CD4-positive, alpha-beta memory T cell (primary cell): ENCODE measurements at regions of chr4 and their contacts with region 1.

Region 1: GRCh38 chr4:6640292-6641163 is at the start of gene MRFAP1:
- DNase-seq: peak; percentile 94 to 97 (median 95)
- H3K4me3 ChIP-seq: peak within 1 kb of the TSS; percentile 90 to 92
- H3K4me3 Mint-ChIP-seq: peak within 1 kb of the TSS; percentile 96 to 100 (median 98)
- H3K27ac ChIP-seq: peak within 1 kb of the TSS; percentile 98
- H3K27ac Mint-ChIP-seq: peak within 1 kb of the TSS; percentile 98 to 100 (median 99)
- H3K4me1 ChIP-seq: peaks cover 31% of the 10 kb centered on the region
- H3K4me1 Mint-ChIP-seq: peaks cover 29 to 40% (median 34%) of the 10 kb centered on the region in 4 donors
- H3K27me3 ChIP-seq: no peaks in the 10 kb centered on the region
- H3K27me3 Mint-ChIP-seq: no peaks in the 10 kb centered on the region
- total RNA-seq, gene MRFAP1: 149 to 157 TPM

Region 2: DNA sequence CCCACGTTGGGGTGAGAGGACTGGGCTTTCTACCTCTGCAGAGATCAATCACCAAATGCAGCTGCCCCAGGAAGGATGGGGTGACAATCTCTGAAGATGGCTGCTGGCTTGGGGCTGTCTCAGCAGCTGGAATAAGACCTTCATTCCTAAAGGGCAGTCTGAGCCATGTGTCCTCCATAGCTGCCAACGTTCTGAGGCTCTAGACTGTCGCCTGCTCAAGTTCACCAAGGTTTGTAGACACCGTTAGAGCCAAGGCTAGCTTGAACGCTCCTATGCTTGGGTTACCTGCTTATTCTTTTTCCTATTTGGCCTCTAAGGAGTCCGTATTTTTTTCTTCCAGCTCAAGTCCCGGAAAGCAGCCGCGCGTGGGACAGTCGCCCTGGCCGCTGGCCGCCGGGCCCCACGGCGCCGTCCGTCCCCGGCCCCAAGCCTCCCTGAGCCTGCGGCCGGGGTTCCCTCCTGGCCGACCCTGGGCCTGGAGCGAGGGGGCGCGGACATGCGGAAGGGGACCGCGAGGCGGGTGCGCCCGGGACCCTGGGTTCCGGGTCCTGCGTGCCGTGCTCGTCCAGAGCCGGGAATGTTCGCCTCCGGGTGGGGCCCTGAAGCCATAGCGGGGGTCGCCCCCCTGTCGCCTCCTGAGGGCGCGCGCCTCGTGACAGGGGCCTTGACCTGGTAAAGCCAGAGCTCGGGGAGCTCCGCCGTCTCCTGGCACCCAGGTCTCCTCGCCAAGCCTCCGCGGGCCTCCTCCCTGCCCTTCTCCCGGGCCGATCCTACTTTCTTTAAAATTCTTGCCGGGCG is 23.3 kb after region 1 on chr4:
- CTCF ChIA-PET with region 1: interaction called, 6 read pairs
- POLR2A ChIA-PET with region 1: interaction called, 59 read pairs
- intact Hi-C with region 1: loop called (anchors 1 kb)
- DNase-seq: no peak
- H3K4me3 ChIP-seq: peak overlapping the region in 1 of 2 donors; percentile 19
- H3K4me3 Mint-ChIP-seq: peak overlapping the region in 6 of 8 donors; percentile 6 to 72 (median 45)
- H3K27ac ChIP-seq: no peak overlapping the region
- H3K27ac Mint-ChIP-seq: no peak overlapping the region
- H3K4me1 ChIP-seq: peaks cover 19% of the 10 kb centered on the region
- H3K4me1 Mint-ChIP-seq: peaks cover 0 to 15% (median 7%) of the 10 kb centered on the region in 4 donors
- H3K27me3 ChIP-seq: no peaks in the 10 kb centered on the region
- H3K27me3 Mint-ChIP-seq: no peaks in the 10 kb centered on the region

Region 3: GRCh38 chr4:6695660-6696630 is 55.4 kb after region 1 on chr4:
- CTCF ChIA-PET with region 1: interaction called, 6 read pairs
- POLR2A ChIA-PET with region 1: interaction called, 113 read pairs
- intact Hi-C with region 1: loop called (anchors 1 kb)
- DNase-seq: peak; percentile 78 to 89 (median 81)
- H3K4me3 ChIP-seq: no peak overlapping the region
- H3K4me3 Mint-ChIP-seq: peak overlapping the region; percentile 33 to 85 (median 71)
- H3K27ac ChIP-seq: peak overlapping the region; percentile 81
- H3K27ac Mint-ChIP-seq: peak overlapping the region; percentile 89 to 96 (median 92)
- H3K4me1 ChIP-seq: peaks cover 98% of the 10 kb centered on the region
- H3K4me1 Mint-ChIP-seq: peaks cover 59 to 92% (median 78%) of the 10 kb centered on the region in 4 donors
- H3K27me3 ChIP-seq: no peaks in the 10 kb centered on the region
- H3K27me3 Mint-ChIP-seq: no peaks in the 10 kb centered on the region

Region 4: DNA sequence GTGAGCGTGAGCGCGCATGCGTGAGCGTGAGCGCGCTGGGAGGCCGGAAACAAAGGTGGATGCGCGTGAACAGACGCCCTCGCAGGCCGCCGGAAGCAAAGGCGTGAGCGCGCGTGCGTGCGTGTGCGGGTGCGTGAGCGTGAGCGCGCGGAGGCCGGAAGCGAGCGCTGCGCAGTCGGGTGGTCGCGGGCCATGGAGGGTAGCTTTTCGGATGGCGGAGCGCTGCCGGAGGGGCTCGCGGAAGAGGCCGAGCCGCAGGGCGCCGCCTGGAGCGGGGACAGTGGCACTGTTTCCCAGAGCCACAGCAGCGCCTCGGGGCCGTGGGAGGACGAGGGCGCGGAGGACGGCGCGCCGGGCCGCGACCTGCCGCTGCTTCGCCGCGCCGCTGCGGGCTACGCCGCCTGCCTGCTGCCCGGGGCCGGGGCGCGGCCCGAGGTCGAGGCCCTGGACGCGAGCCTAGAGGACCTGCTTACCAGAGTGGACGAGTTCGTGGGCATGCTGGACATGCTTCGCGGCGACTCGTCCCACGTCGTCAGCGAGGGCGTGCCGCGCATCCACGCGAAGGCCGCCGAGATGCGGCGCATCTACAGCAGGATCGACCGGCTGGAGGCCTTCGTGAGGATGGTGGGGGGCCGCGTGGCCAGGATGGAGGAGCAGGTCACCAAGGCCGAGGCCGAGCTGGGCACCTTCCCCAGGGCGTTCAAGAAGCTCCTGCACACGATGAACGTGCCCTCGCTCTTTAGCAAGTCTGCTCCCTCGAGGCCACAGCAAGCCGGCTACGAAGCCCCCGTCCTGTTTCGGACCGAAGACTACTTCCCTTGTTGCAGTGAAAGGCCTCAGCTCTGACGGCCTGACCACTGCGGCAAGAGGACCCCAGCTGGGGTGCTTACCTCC is 75.7 kb after region 1 on chr4 and contains the start of gene BLOC1S4:
- CTCF ChIA-PET with region 1: interaction called, 13 read pairs
- POLR2A ChIA-PET with region 1: interaction called, 65 read pairs
- intact Hi-C with region 1: loop called (anchors 1 kb)
- DNase-seq: peak; percentile 86 to 94 (median 93)
- H3K4me3 ChIP-seq: peak within 1 kb of the TSS; percentile 38 to 84
- H3K4me3 Mint-ChIP-seq: peak within 1 kb of the TSS; percentile 87 to 99 (median 93)
- H3K27ac ChIP-seq: peak within 1 kb of the TSS; percentile 92
- H3K27ac Mint-ChIP-seq: peak within 1 kb of the TSS; percentile 92 to 99 (median 98)
- H3K4me1 ChIP-seq: peaks cover 38% of the 10 kb centered on the region
- H3K4me1 Mint-ChIP-seq: peaks cover 25 to 48% (median 35%) of the 10 kb centered on the region in 4 donors
- H3K27me3 ChIP-seq: no peaks in the 10 kb centered on the region
- H3K27me3 Mint-ChIP-seq: no peaks in the 10 kb centered on the region
- total RNA-seq, gene BLOC1S4: 35.3 to 37.8 TPM

Region 5: GRCh38 chr4:6986781-6987587 is 346.5 kb after region 1 on chr4:
- CTCF ChIA-PET with region 1: interaction called, 5 read pairs
- POLR2A ChIA-PET with region 1: interaction called, 6 read pairs
- intact Hi-C with region 1: loop called (anchors 1 kb)
- DNase-seq: peak; percentile 90 to 93 (median 92)
- H3K4me3 ChIP-seq: peak overlapping the region; percentile 65 to 83
- H3K4me3 Mint-ChIP-seq: peak overlapping the region; percentile 94 to 99 (median 95)
- H3K27ac ChIP-seq: peak overlapping the region; percentile 90
- H3K27ac Mint-ChIP-seq: peak overlapping the region; percentile 95 to 98 (median 96)
- H3K4me1 ChIP-seq: peaks cover 78% of the 10 kb centered on the region
- H3K4me1 Mint-ChIP-seq: peaks cover 57 to 86% (median 70%) of the 10 kb centered on the region in 4 donors
- H3K27me3 ChIP-seq: no peaks in the 10 kb centered on the region
- H3K27me3 Mint-ChIP-seq: no peaks in the 10 kb centered on the region

Region 6: DNA sequence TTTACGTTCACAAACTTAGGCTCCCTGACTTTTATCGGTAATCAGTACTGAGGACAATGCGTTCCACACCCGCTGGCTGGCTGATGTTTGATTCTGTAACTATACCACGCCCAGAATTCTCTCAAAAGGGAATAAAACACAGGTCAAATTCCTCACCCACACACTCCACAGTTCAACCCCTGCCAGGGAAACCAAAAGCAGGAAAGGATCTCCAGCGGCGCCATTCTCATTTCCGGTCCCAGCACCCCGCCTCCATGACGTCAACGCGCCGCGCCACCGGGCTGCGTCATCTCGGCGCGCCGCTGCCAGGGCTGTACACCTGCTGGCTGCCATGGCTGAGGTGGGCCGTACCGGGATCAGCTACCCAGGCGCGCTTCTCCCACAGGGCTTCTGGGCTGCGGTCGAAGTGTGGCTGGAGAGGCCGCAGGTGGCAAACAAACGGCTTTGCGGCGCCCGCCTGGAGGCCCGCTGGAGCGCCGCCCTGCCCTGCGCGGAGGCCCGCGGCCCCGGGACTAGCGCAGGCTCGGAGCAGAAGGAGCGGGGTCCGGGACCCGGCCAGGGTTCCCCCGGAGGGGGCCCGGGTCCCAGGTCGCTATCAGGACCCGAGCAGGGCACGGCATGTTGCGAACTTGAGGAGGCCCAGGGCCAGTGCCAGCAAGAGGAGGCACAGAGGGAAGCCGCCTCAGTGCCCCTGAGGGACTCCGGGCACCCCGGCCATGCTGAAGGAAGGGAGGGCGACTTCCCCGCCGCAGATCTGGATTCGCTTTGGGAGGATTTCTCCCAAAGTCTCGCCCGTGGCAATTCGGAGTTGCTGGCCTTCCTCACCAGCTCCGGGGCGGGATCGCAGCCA is 1800.2 kb after region 1 on chr4 and contains the starts of genes ACOX3 and TRMT44:
- CTCF ChIA-PET with region 1: no interaction called
- POLR2A ChIA-PET with region 1: no interaction called
- intact Hi-C with region 1: no loop called
- DNase-seq: peak; percentile 92 to 99 (median 95)
- H3K4me3 ChIP-seq: peak within 1 kb of the TSS; percentile 85 to 88
- H3K4me3 Mint-ChIP-seq: peak within 1 kb of the TSS; percentile 93 to 100 (median 99)
- H3K27ac ChIP-seq: peak within 1 kb of the TSS; percentile 91
- H3K27ac Mint-ChIP-seq: peak within 1 kb of the TSS; percentile 98 to 100 (median 99)
- H3K4me1 ChIP-seq: peaks cover 58% of the 10 kb centered on the region
- H3K4me1 Mint-ChIP-seq: peaks cover 52 to 84% (median 71%) of the 10 kb centered on the region in 4 donors
- H3K27me3 ChIP-seq: no peaks in the 10 kb centered on the region
- H3K27me3 Mint-ChIP-seq: no peaks in the 10 kb centered on the region
- total RNA-seq, gene ACOX3: 16.3 to 17.3 TPM
- total RNA-seq, gene TRMT44: 29.6 to 33.0 TPM